Activated CD4-positive, alpha-beta memory T cell treated with anti-CD3 and anti-CD28 coated beads for 36 hours (primary cell): ENCODE measurements at regions of chr1 and their contacts with region 1.

Region 1: GRCh38 chr1:116826818-116827606 is 72.8 kb downstream of the CD2 start:
- DNase-seq: peak; percentile 90
- H3K4me3 Mint-ChIP-seq: peak overlapping the region; percentile 79
- H3K27ac Mint-ChIP-seq: peak overlapping the region; percentile 91
- H3K4me1 Mint-ChIP-seq: peaks cover 77% of the 10 kb centered on the region
- H3K27me3 Mint-ChIP-seq: no peaks in the 10 kb centered on the region

Region 2: DNA sequence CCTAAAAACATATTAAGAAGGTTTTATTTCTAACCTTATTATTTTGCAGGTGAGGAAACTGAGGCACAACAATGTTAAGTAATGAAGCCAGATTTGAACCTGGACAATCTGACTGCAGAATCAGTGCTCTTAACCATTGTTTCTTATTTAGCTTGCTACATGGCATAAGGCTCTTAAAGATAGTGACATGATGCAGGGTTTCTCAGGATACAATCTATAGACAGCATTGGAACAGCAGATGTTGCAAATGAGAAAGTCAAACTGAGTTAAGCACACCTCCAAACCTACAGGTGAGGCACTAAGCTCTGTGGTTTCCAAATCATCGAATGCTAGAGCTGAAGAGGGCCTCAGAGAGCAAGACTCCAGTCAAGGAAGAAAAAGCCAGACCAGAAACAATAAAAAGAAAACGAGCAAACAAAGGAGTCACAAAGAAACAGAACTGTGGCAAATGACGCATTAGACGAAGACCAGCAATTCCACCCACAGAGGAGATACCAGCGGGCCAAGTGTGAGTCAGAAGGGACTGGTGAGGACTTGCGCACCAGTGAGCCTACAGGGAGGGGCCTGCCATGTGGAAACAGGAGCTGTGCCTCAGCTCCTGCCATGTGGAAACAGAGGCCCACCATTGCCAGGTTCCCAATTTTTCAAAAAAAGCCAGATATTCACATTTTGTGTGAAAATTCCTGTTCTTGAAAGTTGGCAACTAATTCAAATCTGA is 270.6 kb before region 1 on chr1:
- CTCF ChIA-PET with region 1: interaction called, 4 read pairs
- POLR2A ChIA-PET with region 1: no interaction called
- intact Hi-C with region 1: loop called (anchors 5 kb)
- DNase-seq: peak; percentile 91
- H3K4me3 Mint-ChIP-seq: peak overlapping the region; percentile 9
- H3K27ac Mint-ChIP-seq: peak overlapping the region; percentile 91
- H3K4me1 Mint-ChIP-seq: peaks cover 80% of the 10 kb centered on the region
- H3K27me3 Mint-ChIP-seq: no peaks in the 10 kb centered on the region

Region 3: DNA sequence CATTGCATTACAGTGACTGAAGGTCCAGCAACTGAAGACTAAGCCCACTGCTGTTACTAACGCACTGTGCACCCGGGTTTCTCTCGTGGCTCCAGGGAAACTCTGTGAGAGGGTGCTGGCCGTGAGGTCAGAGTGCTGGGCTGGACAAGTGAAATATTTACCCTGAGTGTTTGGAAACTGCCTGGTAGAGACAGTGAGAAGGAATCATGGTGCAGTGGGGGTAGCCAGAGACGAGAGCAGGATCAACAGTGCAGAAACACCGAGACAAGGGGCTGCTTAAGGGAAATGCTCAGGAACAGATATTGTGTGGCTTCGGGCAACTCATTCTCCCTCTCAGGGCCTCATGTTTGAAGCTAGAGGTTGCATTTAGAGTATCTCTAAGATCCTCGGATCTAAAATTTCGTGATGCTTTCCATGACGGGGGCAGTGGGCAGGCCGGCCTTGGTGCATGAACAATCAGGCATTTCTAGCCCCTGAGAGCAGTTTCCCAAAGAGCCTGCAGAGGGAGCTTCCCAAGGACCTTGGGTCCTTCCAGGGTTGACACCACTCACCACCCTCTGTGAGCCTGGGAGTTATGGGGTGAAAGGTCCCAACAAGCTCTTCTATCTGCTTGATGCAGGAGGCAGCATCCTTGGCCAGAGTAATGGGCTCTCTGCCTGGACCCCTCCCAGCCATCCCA is 63.1 kb before region 1 on chr1:
- CTCF ChIA-PET with region 1: interaction called, 32 read pairs
- POLR2A ChIA-PET with region 1: interaction called, 88 read pairs
- intact Hi-C with region 1: loop called (anchors 1 kb)
- DNase-seq: peak; percentile 79
- H3K4me3 Mint-ChIP-seq: peak overlapping the region; percentile 99
- H3K27ac Mint-ChIP-seq: peak overlapping the region; percentile 99
- H3K4me1 Mint-ChIP-seq: peaks cover 88% of the 10 kb centered on the region
- H3K27me3 Mint-ChIP-seq: peaks cover 3% of the 10 kb centered on the region

Region 4: GRCh38 chr1:116806245-116806644 is 20.8 kb before region 1 on chr1:
- CTCF ChIA-PET with region 1: interaction called, 8 read pairs
- POLR2A ChIA-PET with region 1: interaction called, 25 read pairs
- intact Hi-C with region 1: no loop called
- DNase-seq: peak; percentile 91
- H3K4me3 Mint-ChIP-seq: peak overlapping the region; percentile 79
- H3K27ac Mint-ChIP-seq: peak overlapping the region; percentile 99
- H3K4me1 Mint-ChIP-seq: peaks cover 78% of the 10 kb centered on the region
- H3K27me3 Mint-ChIP-seq: no peaks in the 10 kb centered on the region

Region 5: GRCh38 chr1:116934586-116935207 is 107.7 kb after region 1 on chr1:
- CTCF ChIA-PET with region 1: no interaction called
- POLR2A ChIA-PET with region 1: no interaction called
- intact Hi-C with region 1: loop called (anchors 2 kb)
- DNase-seq: no peak
- H3K4me3 Mint-ChIP-seq: no peak overlapping the region
- H3K27ac Mint-ChIP-seq: no peak overlapping the region
- H3K4me1 Mint-ChIP-seq: peaks cover 26% of the 10 kb centered on the region
- H3K27me3 Mint-ChIP-seq: no peaks in the 10 kb centered on the region

Region 6: GRCh38 chr1:117045644-117046043 is 218.6 kb after region 1 on chr1:
- CTCF ChIA-PET with region 1: no interaction called
- POLR2A ChIA-PET with region 1: no interaction called
- intact Hi-C with region 1: no loop called
- DNase-seq: no peak
- H3K4me3 Mint-ChIP-seq: no peak overlapping the region
- H3K27ac Mint-ChIP-seq: no peak overlapping the region
- H3K4me1 Mint-ChIP-seq: peaks cover 13% of the 10 kb centered on the region
- H3K27me3 Mint-ChIP-seq: no peaks in the 10 kb centered on the region